ENCODE measurements at regions of chr3 and their contacts with region 1.

Region 1: GRCh38 chr3:173173652-173174051 is 32.6 kb upstream of the SPATA16 start:
- DNase-seq: no peak
- H3K4me3 ChIP-seq: no peak overlapping the region
- H3K27ac ChIP-seq: no peak overlapping the region
- H3K4me1 ChIP-seq: no peaks in the 10 kb centered on the region
- H3K27me3 ChIP-seq: no peaks in the 10 kb centered on the region
- CTCF ChIP-seq: no peak
- EP300 ChIP-seq: no peak
- POLR2A ChIP-seq: no peak

Region 2: GRCh38 chr3:173191611-173192010 is 18.0 kb after region 1 on chr3:
- in situ Hi-C with region 1: no loop called
- intact Hi-C with region 1: loop called (anchors 1 kb)
- DNase-seq: no peak
- H3K4me3 ChIP-seq: no peak overlapping the region
- H3K27ac ChIP-seq: no peak overlapping the region
- H3K4me1 ChIP-seq: no peaks in the 10 kb centered on the region
- H3K27me3 ChIP-seq: no peaks in the 10 kb centered on the region
- CTCF ChIP-seq: no peak
- EP300 ChIP-seq: no peak
- POLR2A ChIP-seq: no peak

Region 3: DNA sequence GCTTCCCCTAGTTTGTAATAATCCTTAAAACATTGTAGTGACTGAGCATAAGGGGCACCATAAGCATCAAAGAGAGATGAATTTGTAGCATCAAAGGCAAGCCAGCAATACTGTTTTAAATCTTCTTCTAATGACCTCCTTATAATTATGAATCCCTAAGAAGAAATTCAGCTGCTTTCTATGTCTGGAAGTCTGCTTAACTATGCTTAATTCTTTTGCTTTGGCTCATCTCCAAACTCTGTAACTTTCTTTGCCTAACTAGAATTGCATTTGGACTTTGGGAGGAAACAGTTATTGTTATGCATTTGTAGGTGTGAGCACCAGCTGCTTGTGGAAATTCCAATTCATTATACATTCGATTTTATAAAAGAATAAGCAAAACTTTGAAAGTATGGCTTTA is 85.0 kb after region 1 on chr3:
- in situ Hi-C with region 1: no loop called
- intact Hi-C with region 1: no loop called
- DNase-seq: no peak
- H3K4me3 ChIP-seq: no peak overlapping the region
- H3K27ac ChIP-seq: no peak overlapping the region
- H3K4me1 ChIP-seq: no peaks in the 10 kb centered on the region
- H3K27me3 ChIP-seq: no peaks in the 10 kb centered on the region
- CTCF ChIP-seq: no peak
- EP300 ChIP-seq: no peak
- POLR2A ChIP-seq: no peak

Measured in transverse colon (tissue), 4 donors.